ENCODE measurements at regions of chr20 and their contacts with region 1.

Region 1: DNA sequence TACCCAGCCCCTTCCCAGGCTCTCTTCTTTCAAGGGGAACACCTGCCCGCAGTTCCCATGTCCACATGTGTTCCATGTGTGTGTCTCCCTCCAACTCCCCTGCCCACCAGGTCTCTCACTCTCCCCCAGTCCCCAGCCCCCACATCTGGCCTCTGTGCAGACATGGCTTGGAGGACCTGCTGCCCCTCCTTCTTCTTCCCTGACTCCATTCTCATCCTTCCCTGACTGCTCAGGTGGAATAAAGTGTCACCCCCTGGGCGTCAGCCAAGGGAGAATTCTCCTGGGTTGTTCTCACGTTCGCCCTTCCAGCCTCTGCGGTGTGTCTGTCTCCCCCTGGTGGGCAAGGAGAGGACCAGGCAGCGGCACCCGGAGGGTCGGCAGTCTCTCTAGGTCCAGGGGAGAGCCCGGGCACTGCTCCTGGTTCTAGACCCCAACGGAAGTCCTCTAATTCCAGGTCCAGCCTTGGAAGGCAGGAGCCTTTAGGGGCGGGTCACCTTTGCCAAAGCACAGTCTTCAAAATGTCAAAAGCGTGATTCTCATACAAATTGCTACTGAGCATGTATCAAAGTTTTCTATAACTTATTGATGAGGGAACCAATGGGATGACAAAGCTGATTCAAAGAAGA is 50.5 kb downstream of the EBF4 start:
- DNase-seq: no peak
- ATAC-seq: peak in 2 of 4 donors; percentile 46 to 53
- H3K4me3 ChIP-seq: no peak overlapping the region
- H3K27ac ChIP-seq: no peak overlapping the region
- H3K4me1 ChIP-seq: no peaks in the 10 kb centered on the region
- H3K27me3 ChIP-seq: peaks cover 0 to 42% (median 2%) of the 10 kb centered on the region in 3 donors
- CTCF ChIP-seq: peak; percentile 51

Region 2: GRCh38 chr20:2692036-2692885 is 50.8 kb before region 1 on chr20 and contains the start of gene EBF4:
- intact Hi-C with region 1: loop called in 1 of 2 experiments (anchors 5 kb)
- DNase-seq: peak in 1 of 2 donors; percentile 57
- ATAC-seq: peak in 3 of 4 donors; percentile 31 to 42 (median 38)
- H3K4me3 ChIP-seq: peak within 1 kb of the TSS; percentile 60
- H3K27ac ChIP-seq: peak within 1 kb of the TSS; percentile 60
- H3K4me1 ChIP-seq: no peaks in the 10 kb centered on the region
- H3K27me3 ChIP-seq: peaks cover 0 to 70% (median 15%) of the 10 kb centered on the region in 3 donors
- CTCF ChIP-seq: no peak
- total RNA-seq, gene EBF4: 1.2 to 1.9 (median 1.5) TPM

Measured in psoas muscle (tissue), 8 donors.